Activated CD4-positive, alpha-beta memory T cell treated with anti-CD3 and anti-CD28 coated beads for 36 hours (primary cell): ENCODE measurements at regions of chr15 and their contacts with region 1.

Region 1: DNA sequence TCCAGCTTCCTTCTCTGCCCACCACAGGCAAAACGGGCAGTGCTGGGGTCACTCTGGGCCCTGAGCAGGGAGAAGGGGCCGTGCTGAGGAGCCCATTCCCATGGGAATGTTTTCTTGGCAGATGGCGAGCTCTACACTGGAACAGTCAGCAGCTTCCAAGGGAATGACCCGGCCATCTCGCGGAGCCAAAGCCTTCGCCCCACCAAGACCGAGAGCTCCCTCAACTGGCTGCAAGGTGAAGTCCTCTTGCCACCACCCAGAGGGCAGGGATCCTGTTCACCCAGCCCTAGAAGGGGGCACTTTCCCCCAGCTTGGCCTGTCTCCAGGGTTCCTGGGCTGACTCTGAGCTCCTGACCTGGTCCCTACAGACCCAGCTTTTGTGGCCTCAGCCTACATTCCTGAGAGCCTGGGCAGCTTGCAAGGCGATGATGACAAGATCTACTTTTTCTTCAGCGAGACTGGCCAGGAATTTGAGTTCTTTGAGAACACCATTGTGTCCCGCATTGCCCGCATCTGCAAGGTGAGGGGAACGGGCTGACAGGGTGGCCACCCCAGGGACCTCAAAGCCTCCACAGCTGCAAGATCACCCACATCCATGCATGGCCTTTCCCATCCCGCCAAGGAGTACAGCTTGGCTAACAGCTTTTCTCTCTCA is 12.4 kb downstream of the CIB1 start:
- DNase-seq: peak; percentile 51
- H3K4me3 Mint-ChIP-seq: no peak overlapping the region
- H3K27ac Mint-ChIP-seq: no peak overlapping the region
- H3K4me1 Mint-ChIP-seq: peaks cover 4% of the 10 kb centered on the region
- H3K27me3 Mint-ChIP-seq: no peaks in the 10 kb centered on the region

Region 2: DNA sequence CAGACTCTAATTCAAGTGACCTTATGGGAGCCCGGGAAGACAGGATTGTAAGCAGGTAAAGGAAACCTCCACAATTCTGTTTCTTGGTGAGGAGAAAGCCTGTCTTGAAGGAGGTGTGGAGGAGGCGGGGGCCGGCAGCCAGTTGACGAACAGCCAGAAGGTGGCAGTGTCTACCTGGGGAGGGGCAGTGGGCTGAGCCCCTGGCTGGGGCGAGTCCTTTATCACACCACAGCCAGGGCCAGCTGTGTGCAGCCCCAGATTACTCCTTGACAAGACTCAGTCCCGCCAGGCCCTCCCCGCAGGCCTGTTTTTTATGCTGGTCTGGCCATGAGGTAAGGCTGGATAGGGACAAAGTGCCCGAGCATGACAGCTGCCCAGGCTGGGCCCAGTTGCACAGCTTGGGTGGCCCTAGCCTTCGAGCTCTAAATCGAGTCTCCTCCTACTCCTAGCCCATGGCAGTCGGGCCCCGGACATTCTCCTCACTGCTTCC is 78.2 kb before region 1 on chr15:
- CTCF ChIA-PET with region 1: interaction called, 14 read pairs
- POLR2A ChIA-PET with region 1: no interaction called
- intact Hi-C with region 1: no loop called
- DNase-seq: peak; percentile 85
- H3K4me3 Mint-ChIP-seq: no peak overlapping the region
- H3K27ac Mint-ChIP-seq: peak overlapping the region; percentile 39
- H3K4me1 Mint-ChIP-seq: peaks cover 20% of the 10 kb centered on the region
- H3K27me3 Mint-ChIP-seq: no peaks in the 10 kb centered on the region

Region 3: GRCh38 chr15:90151989-90152645 is 69.3 kb before region 1 on chr15:
- CTCF ChIA-PET with region 1: interaction called, 12 read pairs
- POLR2A ChIA-PET with region 1: no interaction called
- intact Hi-C with region 1: no loop called
- DNase-seq: no peak
- H3K4me3 Mint-ChIP-seq: no peak overlapping the region
- H3K27ac Mint-ChIP-seq: no peak overlapping the region
- H3K4me1 Mint-ChIP-seq: peaks cover 7% of the 10 kb centered on the region
- H3K27me3 Mint-ChIP-seq: no peaks in the 10 kb centered on the region

Region 4: GRCh38 chr15:90178468-90179435 is 42.6 kb before region 1 on chr15:
- CTCF ChIA-PET with region 1: interaction called, 12 read pairs
- POLR2A ChIA-PET with region 1: no interaction called
- intact Hi-C with region 1: no loop called
- DNase-seq: peak; percentile 25
- H3K4me3 Mint-ChIP-seq: no peak overlapping the region
- H3K27ac Mint-ChIP-seq: no peak overlapping the region
- H3K4me1 Mint-ChIP-seq: peaks cover 13% of the 10 kb centered on the region
- H3K27me3 Mint-ChIP-seq: no peaks in the 10 kb centered on the region

Region 5: GRCh38 chr15:90201130-90201949 is 20.0 kb before region 1 on chr15 and contains the start of gene SEMA4B:
- CTCF ChIA-PET with region 1: interaction called, 11 read pairs
- POLR2A ChIA-PET with region 1: no interaction called
- intact Hi-C with region 1: no loop called
- DNase-seq: peak; percentile 77
- H3K4me3 Mint-ChIP-seq: peak within 1 kb of the TSS; percentile 76
- H3K27ac Mint-ChIP-seq: peak within 1 kb of the TSS; percentile 62
- H3K4me1 Mint-ChIP-seq: peaks cover 18% of the 10 kb centered on the region
- H3K27me3 Mint-ChIP-seq: no peaks in the 10 kb centered on the region
- total RNA-seq, gene SEMA4B: 13.1 to 16.7 TPM

Region 6: DNA sequence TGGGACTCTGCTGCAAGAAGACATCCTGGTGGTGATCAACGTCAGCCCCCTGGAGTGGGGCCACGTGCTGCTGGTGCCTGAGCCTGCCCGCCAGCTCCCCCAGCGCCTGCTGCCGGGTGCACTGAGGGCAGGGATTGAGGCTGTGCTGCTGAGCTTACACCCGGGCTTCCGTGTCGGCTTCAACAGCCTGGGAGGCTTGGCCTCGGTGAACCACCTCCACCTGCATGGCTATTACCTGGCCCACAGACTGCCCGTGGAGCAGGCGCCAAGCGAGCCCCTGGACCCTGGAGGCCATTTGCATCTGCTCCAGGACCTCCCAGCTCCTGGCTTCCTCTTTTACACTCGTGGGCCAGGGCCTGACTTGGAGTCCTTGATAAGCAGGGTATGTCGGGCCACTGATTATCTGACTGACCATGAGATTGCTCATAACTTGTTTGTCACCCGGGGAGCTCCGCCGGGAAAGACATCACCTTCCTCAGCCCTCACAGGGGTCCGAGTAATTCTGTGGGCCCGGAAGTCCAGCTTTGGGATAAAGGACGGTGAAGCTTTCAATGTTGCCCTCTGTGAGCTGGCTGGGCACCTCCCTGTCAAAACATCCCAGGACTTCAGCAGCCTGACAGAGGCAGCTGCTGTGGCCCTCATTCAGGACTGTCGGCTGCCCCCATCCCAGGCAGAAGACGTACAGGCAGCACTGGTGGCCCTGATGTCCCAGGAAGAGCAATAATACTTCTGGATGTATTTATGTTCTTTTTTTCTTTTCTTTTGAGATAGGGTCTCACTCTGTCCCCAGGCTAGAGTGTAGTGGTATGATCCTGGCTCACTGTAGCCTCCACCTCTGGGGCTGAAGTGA is 20.2 kb after region 1 on chr15:
- CTCF ChIA-PET with region 1: no interaction called
- POLR2A ChIA-PET with region 1: no interaction called
- intact Hi-C with region 1: no loop called
- DNase-seq: no peak
- H3K4me3 Mint-ChIP-seq: no peak overlapping the region
- H3K27ac Mint-ChIP-seq: no peak overlapping the region
- H3K4me1 Mint-ChIP-seq: peaks cover 13% of the 10 kb centered on the region
- H3K27me3 Mint-ChIP-seq: no peaks in the 10 kb centered on the region

Region 7: DNA sequence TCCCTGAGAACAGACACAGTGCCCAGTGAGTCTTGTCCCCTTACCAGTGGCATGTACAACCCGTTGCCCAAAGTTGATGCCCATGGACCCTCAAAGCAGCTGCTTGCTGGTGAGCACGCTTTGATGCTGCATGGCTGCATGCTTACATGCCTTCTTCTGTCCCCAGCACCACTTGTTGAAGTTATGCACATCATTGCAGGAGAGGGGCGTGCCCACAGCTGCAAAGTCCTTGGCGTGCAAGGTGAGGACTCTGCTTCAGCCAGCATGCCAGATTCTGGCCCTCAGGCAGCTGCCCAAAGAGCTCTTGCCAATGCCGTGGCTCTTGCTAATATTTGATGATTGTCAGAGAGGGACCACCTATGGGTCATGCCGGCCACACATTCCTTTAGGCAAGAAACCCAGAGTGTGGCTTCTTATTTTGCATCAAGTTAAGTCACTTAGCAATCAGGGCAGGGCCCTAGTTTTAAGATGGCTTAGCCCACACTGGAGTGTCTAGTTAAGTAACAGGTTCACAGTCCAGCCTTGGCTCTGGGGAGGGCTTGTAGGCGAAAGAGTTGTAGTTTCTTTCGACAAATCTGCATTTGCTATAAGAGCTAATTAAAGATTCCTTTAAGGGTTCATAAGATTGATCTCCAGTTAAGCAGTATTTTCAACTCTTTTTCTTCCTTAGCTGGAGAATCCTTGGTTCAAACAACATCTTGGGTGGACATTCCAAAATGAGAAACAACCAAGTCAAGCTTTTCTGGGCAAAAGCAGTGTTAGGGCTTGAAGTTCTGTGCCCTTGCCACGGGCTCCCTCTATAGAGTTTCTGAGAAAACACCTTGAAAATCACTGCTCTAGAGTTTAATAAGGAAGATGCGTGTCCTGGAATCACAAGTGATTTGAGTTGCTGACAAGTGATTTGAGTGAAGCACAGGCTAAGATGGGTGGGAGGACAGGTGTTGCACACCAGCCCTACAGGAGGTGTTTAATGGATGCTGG is 1760.7 kb after region 1 on chr15:
- CTCF ChIA-PET with region 1: no interaction called
- POLR2A ChIA-PET with region 1: no interaction called
- intact Hi-C with region 1: no loop called
- DNase-seq: no peak
- H3K4me3 Mint-ChIP-seq: no peak overlapping the region
- H3K27ac Mint-ChIP-seq: no peak overlapping the region
- H3K4me1 Mint-ChIP-seq: peaks cover 18% of the 10 kb centered on the region
- H3K27me3 Mint-ChIP-seq: no peaks in the 10 kb centered on the region